HEK293 (cell line): ENCODE measurements at regions of chr9 and their contacts with region 1.

Region 1: DNA sequence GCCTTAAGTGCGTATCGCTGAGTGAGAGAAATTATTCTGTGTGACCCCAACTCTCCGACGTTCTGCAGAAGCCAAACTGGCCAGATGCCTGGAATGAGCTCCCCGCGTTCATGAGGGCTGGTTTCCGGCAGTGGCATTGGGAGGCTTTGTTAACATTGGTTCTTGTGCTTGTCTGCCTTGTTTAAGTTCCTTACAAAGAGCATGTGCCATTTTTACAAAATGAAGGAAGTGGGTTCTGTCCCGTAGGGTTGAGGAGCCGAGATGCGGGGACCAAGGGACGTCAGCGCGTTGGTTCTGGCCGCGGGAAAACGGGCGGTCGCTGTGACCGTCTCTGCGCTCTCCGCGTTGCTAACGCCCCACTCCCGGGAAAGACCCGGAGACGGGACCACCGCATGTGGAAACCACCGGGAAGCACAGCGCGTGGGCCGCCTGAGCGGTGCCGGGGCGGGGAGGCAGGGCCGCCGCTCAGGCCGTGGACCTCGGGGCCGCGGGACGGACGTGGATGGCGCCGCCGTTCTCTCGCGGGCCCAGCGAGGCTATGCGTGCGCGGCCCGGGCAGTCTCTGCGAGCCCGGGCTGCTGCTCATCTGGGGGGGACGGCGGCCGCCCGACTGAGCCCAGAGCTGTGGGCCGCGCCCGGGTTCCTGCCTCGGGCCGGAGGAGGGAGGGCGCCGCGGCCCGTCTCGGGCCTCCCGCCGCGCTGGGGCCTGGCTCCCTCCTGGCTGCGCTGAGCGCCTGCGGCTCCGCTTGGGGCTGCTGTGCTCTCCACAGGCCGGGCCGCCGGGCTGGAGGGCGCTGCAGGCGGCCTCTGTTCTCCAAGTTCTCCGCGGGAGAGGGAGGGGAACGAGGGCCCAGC is 13.4 kb downstream of the RABL6 start:
- H3K4me3 ChIP-seq: no peak overlapping the region
- H3K27ac ChIP-seq: no peak overlapping the region
- H3K4me1 ChIP-seq: no peaks in the 10 kb centered on the region
- CTCF ChIP-seq: no peak

Region 2: GRCh38 chr9:136807281-136808074 is 13.7 kb before region 1 on chr9 and contains the start of gene RABL6:
- CTCF ChIA-PET with region 1: interaction called, 6 read pairs
- POLR2A ChIA-PET with region 1: interaction called, 13 read pairs
- H3K4me3 ChIP-seq: peak within 1 kb of the TSS; percentile 84
- H3K27ac ChIP-seq: peak within 1 kb of the TSS; percentile 96
- H3K4me1 ChIP-seq: peaks cover 7% of the 10 kb centered on the region; the same call in 1 of the 2 replicates
- CTCF ChIP-seq: no peak